BJ (cell line): ENCODE measurements at regions of chr20 and their contacts with region 1.

Region 1: GRCh38 chr20:740141-740540 is 28.2 kb downstream of the SLC52A3 start:
- DNase-seq: no peak
- H3K4me3 ChIP-seq: no peak overlapping the region
- H3K27me3 ChIP-seq: no peaks in the 10 kb centered on the region; the same call in 1 of the 2 replicates
- CTCF ChIP-seq: no peak

Region 2: DNA sequence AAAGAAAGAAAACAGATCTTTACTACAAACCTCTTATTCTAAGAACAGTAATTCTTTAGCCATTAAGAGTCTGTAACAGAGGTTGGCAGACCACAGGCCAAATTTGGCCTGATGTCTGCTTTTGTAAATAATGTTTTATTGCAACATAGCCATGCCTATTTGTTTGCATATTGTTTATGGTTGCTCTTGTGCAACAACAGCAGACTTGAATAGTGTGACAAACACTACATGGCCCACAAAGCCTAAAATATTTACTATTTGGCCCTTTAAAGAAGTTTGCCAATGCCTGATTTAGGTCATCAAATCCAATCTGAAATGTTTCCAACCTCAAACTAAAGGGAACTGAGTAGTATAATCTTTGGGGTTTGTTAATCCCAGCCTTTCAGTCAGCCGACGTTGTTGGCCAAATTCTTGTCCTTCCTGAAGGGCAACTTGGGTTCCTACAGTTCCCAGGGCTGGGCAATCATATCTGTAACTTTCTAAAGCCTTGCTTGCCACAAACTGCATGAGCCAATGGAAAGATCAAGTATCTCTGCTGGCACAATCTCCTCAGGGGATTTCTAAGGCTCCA is 243.9 kb before region 1 on chr20:
- CTCF ChIA-PET with region 1: no interaction called
- POLR2A ChIA-PET with region 1: no interaction called
- DNase-seq: no peak
- H3K4me3 ChIP-seq: no peak overlapping the region
- H3K27me3 ChIP-seq: no peaks in the 10 kb centered on the region
- CTCF ChIP-seq: no peak

Region 3: DNA sequence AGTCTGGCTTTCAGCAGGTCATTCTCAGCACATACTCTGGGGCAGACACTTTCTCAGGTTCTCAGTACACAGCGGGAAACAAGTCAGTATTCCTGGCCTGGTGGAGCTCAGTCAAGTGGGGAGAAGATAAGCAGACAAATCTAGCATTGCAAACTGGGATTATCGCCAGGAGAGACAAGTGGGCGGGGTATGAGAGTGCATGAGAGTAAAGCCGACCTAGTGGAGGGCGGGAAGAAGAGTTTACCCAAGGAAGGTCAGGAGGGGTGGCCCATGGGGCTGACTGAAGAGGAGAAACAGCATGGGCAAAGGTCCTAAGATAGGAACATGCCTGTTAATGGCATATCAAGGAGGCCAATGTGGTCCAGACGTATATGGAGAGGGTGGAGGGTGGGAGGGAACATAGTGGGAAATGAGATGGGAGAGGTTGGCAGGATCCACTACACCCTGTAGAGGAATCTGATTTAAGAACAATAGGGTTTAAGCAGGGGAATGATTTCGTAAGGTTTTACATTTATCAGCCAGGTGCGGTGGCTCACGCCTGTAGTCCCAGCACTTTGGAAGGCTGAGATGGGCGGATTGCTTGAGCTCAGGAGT is 184.1 kb before region 1 on chr20:
- CTCF ChIA-PET with region 1: interaction called, 80 read pairs
- POLR2A ChIA-PET with region 1: no interaction called
- DNase-seq: no peak
- H3K4me3 ChIP-seq: no peak overlapping the region
- H3K27me3 ChIP-seq: peaks cover 10% of the 10 kb centered on the region; the same call in 1 of the 2 replicates
- CTCF ChIP-seq: no peak

Region 4: DNA sequence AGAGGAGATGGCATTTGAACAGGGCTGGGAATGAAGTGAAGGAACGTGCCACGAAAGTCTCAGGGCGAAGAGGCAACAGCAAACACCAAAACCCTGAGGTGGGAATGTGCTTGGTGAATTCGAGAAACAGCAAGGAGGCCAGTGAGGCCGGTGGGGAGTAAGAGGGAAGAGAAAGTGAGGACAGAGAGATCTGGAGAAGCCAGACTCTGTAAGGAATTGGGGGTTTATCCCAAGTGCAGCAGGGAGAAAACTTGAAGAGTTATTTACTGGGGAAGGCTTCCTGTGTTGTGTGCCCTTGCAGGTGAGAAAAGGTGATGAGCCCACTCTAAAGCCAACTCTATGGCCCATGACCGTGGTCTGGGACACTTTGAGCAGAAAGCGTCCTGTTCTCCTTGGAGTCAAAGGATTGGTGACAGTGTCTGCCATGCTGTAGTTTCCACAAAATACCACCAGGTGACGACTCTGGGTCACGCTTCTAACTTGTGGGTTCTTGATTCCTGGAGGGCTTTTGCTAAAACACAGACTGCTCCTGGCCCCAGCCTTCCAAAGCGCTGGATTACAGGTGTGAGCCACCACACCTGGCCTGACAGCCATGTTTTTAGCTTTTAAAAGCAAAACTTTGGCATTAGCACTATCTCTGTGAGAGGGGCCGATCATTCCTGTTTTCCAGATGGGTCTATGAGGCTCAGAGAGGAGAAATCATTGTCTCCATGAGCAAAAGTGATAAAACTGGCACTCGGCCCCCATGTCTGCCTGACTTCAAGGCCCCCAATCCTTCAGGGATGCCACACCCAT is 178.5 kb before region 1 on chr20:
- CTCF ChIA-PET with region 1: interaction called, 80 read pairs
- POLR2A ChIA-PET with region 1: no interaction called
- DNase-seq: no peak
- H3K4me3 ChIP-seq: no peak overlapping the region
- H3K27me3 ChIP-seq: peaks cover 6% of the 10 kb centered on the region; the same call in 1 of the 2 replicates
- CTCF ChIP-seq: peak; percentile 97

Region 5: GRCh38 chr20:571754-572441 is 168.2 kb before region 1 on chr20:
- CTCF ChIA-PET with region 1: interaction called, 15 read pairs
- POLR2A ChIA-PET with region 1: no interaction called
- DNase-seq: no peak
- H3K4me3 ChIP-seq: no peak overlapping the region
- H3K27me3 ChIP-seq: peaks cover 29% of the 10 kb centered on the region
- CTCF ChIP-seq: no peak

Region 6: GRCh38 chr20:667391-667964 is 72.7 kb before region 1 on chr20:
- CTCF ChIA-PET with region 1: interaction called, 22 read pairs
- POLR2A ChIA-PET with region 1: no interaction called
- DNase-seq: no peak
- H3K4me3 ChIP-seq: no peak overlapping the region
- H3K27me3 ChIP-seq: peaks cover 32% of the 10 kb centered on the region
- CTCF ChIP-seq: peak; percentile 94

Region 7: GRCh38 chr20:728248-728944 is 11.7 kb before region 1 on chr20:
- CTCF ChIA-PET with region 1: interaction called, 24 read pairs
- POLR2A ChIA-PET with region 1: no interaction called
- DNase-seq: no peak
- H3K4me3 ChIP-seq: peak overlapping the region; percentile 33
- H3K27me3 ChIP-seq: peaks cover 24% of the 10 kb centered on the region
- CTCF ChIP-seq: peak; percentile 64

Region 8: GRCh38 chr20:750801-751200 is 10.7 kb after region 1 on chr20:
- CTCF ChIA-PET with region 1: interaction called, 16 read pairs
- POLR2A ChIA-PET with region 1: no interaction called
- DNase-seq: no peak
- H3K4me3 ChIP-seq: no peak overlapping the region
- H3K27me3 ChIP-seq: peaks cover 2% of the 10 kb centered on the region; the same call in 1 of the 2 replicates
- CTCF ChIP-seq: no peak